Head of caudate nucleus (tissue), 42 donors: ENCODE measurements at regions of chr17 and their contacts with region 1.

Region 1: GRCh38 chr17:67376737-67377487 is at the start of gene PITPNC1:
- DNase-seq: peak; percentile 59 to 96 (median 90)

Region 2: DNA sequence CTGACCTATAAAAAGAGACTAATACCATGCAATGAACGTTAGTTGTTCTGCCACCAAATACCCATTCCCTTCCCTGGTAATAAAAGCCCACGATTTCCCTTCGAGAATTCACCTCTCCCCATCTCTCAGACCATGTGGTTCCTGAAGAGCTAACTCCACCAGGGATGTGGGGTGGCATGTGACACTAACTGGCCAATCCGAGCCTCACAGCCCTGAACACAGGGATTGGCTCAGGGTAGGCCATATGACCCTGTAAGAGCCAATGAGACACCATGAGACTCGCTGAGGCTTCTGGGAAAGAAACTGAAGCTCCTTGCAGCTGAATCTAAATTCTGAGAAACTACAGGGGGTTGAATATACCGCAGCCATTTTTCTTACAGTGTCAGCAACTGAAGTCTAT is 153.0 kb before region 1 on chr17:
- intact Hi-C with region 1: no loop called
- DNase-seq: no peak

Region 3: GRCh38 chr17:67310406-67310805 is 66.5 kb before region 1 on chr17:
- intact Hi-C with region 1: no loop called
- DNase-seq: no peak

Region 4: GRCh38 chr17:67474081-67474661 is 97.3 kb after region 1 on chr17:
- intact Hi-C with region 1: loop called (anchors 5 kb)
- DNase-seq: peak in 2 of 42 donors; percentile 13 to 37

Region 5: GRCh38 chr17:67602956-67603355 is 226.0 kb after region 1 on chr17:
- intact Hi-C with region 1: loop called (anchors 10 kb)
- DNase-seq: peak in 27 of 42 donors; percentile 15 to 65 (median 40)